ENCODE measurements at regions of chr1 and their contacts with region 1.

Region 1: DNA sequence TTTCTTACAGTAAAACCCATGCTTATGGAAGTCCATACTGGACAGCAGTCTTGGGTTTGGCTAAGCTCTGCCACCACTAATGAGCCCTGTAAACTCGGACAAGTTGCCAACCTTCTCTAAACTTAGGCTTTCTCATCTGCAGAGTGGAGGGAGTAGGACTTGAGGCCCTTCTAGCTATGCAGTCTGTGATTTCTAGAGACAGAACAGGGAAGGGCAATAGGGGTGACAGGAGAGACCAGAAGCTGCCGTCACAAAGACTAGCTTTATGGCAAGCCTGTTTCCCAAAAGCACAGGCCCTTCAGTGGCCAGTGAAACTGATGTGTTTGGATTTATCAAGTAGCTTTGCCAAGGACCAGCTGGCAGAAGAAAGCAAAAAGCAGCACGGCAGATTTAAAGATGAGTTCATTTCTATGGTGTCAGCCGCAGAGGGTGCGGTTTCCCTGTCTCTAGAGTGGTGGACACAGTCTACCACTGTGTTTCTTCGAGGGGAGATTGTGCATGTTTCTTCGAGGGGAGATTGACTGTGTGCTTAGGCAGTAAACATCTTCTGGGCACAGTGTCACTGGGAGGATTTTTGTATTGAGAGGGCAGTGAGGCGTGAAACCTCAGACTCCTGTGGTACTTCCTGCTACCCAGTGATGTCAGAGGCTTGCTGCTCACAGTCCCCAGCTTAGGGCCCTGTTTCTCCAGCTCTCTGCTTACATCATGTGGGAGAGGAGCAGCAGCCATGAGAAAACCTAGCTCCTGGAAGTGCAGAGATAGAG is 119.0 kb downstream of the ROR1 start:
- DNase-seq: peak; percentile 46
- ATAC-seq: peak; percentile 89
- H3K4me3 Mint-ChIP-seq: peak overlapping the region; percentile 59
- H3K27ac Mint-ChIP-seq: peak overlapping the region; percentile 83
- H3K4me1 Mint-ChIP-seq: peaks cover 53% of the 10 kb centered on the region
- H3K27me3 Mint-ChIP-seq: peaks cover 9% of the 10 kb centered on the region
- CTCF ChIP-seq: no peak

Region 2: GRCh38 chr1:62810420-62811274 is 1082.2 kb before region 1 on chr1:
- CTCF ChIA-PET with region 1: no interaction called
- POLR2A ChIA-PET with region 1: no interaction called
- intact Hi-C with region 1: loop called (anchors 10 kb)
- DNase-seq: no peak
- ATAC-seq: peak; percentile 85
- H3K4me3 Mint-ChIP-seq: peak overlapping the region; percentile 52
- H3K27ac Mint-ChIP-seq: peak overlapping the region; percentile 88
- H3K4me1 Mint-ChIP-seq: peaks cover 47% of the 10 kb centered on the region
- H3K27me3 Mint-ChIP-seq: no peaks in the 10 kb centered on the region
- CTCF ChIP-seq: no peak

Region 3: DNA sequence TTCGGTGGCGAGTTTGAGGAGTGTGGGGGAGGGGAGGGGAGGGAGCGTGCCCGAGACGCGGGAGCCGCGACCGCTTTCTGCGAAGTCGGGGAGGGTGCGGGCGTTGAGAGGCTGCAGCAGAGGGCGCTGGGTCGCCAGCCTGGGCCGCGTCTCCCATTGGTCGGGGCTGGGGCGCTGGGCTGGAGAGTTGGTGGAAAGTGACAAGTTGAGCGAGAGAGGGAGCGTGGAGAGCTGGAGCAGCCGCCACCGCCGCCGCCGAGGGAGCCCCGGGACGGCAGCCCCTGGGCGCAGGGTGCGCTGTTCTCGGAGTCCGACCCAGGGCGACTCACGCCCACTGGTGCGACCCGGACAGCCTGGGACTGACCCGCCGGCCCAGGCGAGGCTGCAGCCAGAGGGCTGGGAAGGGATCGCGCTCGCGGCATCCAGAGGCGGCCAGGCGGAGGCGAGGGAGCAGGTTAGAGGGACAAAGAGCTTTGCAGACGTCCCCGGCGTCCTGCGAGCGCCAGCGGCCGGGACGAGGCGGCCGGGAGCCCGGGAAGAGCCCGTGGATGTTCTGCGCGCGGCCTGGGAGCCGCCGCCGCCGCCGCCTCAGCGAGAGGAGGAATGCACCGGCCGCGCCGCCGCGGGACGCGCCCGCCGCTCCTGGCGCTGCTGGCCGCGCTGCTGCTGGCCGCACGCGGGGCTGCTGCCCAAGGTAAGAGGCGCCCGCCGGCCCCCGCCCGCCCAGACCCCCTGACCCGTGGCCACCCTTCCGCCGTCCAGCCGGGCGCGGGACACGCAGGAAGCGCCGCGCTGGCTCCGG is 118.8 kb before region 1 on chr1 and contains the start of gene ROR1:
- CTCF ChIA-PET with region 1: no interaction called
- POLR2A ChIA-PET with region 1: no interaction called
- intact Hi-C with region 1: loop called (anchors 2 kb)
- DNase-seq: peak; percentile 53
- ATAC-seq: peak; percentile 96
- H3K4me3 Mint-ChIP-seq: peak within 1 kb of the TSS; percentile 85
- H3K27ac Mint-ChIP-seq: no peak within 1 kb of the TSS
- H3K4me1 Mint-ChIP-seq: peaks cover 22% of the 10 kb centered on the region
- H3K27me3 Mint-ChIP-seq: peaks cover 40% of the 10 kb centered on the region
- CTCF ChIP-seq: no peak
- total RNA-seq, gene ROR1: 1.8 and 2.2 TPM in 2 replicates

Region 4: DNA sequence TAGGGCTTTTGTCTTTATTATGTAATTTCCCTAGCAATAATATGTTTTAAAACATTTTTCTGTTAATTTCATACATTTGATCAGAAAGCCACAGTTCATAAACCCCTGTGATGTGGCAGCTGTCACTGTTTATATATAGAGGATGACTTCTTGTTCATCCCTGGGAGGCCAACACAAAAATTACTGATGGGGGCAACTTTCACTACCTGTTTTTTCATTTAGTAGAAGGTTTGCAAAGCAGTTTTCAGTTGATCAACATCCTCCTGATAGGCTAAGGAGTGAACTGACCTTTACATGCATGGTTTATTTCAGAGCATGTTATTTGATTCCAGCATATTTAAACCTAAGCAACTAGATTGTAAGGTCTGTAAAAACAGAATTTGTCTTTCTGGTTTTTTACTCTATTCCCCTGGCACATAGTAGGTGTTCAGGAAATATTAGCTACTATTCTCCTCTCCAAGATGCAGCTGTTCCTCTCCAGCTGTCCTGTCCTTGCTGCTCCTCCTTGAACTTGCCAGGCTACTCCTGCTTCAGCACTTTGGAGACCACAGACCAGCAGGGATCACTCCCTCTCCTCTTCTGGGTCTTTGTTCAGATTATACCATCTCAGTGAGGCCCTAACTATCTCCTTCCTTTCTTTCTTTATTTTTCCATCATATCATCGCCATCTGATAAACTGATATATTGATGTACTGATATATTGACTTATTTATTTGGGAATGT is 64.3 kb before region 1 on chr1:
- CTCF ChIA-PET with region 1: interaction called, 6 read pairs
- POLR2A ChIA-PET with region 1: interaction called, 8 read pairs
- intact Hi-C with region 1: loop called (anchors 1 kb)
- DNase-seq: no peak
- ATAC-seq: peak; percentile 86
- H3K4me3 Mint-ChIP-seq: no peak overlapping the region
- H3K27ac Mint-ChIP-seq: peak overlapping the region; percentile 20
- H3K4me1 Mint-ChIP-seq: peaks cover 46% of the 10 kb centered on the region
- H3K27me3 Mint-ChIP-seq: no peaks in the 10 kb centered on the region
- CTCF ChIP-seq: no peak

Region 5: DNA sequence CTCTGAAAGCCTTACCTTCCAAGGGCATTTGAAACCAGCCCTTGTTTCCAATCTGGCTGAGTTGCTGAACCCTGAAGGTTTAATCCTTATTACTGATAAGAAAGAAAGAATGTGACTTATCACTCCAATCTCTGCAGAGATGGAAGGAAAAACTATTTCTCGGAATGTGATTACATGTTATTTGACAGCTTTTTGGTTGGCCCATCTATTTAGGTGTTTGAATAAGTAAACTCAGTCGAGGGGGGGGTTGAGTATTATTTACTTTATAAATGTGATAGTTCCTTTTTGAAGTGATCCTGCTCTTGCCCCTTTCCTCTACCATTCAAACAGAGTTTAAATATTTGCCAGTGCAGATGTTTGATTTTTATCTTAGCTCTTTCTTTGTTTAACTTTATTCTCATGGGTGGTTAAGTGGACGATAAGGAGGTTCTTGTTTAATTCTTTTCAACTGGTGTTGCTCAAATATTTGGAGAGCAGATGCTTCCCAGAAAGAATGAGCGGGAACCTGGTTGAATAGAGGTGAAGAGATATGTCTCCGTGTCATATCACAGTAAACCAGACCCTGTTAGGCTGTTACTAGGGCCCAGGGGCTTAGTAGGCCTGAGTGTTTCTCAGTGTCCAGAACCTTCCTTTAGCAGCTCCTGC is 703.2 kb after region 1 on chr1:
- CTCF ChIA-PET with region 1: no interaction called
- POLR2A ChIA-PET with region 1: no interaction called
- intact Hi-C with region 1: no loop called
- DNase-seq: no peak
- ATAC-seq: no peak
- H3K4me3 Mint-ChIP-seq: no peak overlapping the region
- H3K27ac Mint-ChIP-seq: no peak overlapping the region
- H3K4me1 Mint-ChIP-seq: no peaks in the 10 kb centered on the region
- H3K27me3 Mint-ChIP-seq: peaks cover 3% of the 10 kb centered on the region
- CTCF ChIP-seq: no peak

Measured in activated B cell treated with CpG ODN at 0.5 μM for 24 hours (primary cell).